CD14-positive monocyte (primary cell): ENCODE measurements at regions of chr1 and their contacts with region 1.

Region 1: GRCh38 chr1:182789138-182790076 is at the start of gene NPL:
- DNase-seq: peak; percentile 74 to 82 (median 76)
- H3K4me3 ChIP-seq: peak within 1 kb of the TSS; percentile 62 to 79 (median 74)
- H3K4me3 Mint-ChIP-seq: peak within 1 kb of the TSS; percentile 93 to 95
- H3K27ac ChIP-seq: peak within 1 kb of the TSS; percentile 46 to 88
- H3K27ac Mint-ChIP-seq: peak within 1 kb of the TSS; percentile 86 to 96 (median 89)
- H3K4me1 ChIP-seq: peaks cover 32 to 47% of the 10 kb centered on the region in 2 donors
- H3K4me1 Mint-ChIP-seq: peaks cover 58% of the 10 kb centered on the region
- H3K27me3 ChIP-seq: peaks cover 3 to 11% of the 10 kb centered on the region in 2 donors
- H3K27me3 Mint-ChIP-seq: peaks cover 16 to 24% (median 18%) of the 10 kb centered on the region in 3 donors
- CTCF ChIP-seq: no peak
- polyA plus RNA-seq, gene NPL: 56.6 to 127 (median 127) TPM

Region 2: GRCh38 chr1:182391362-182392044 is 397.9 kb before region 1 on chr1 and contains the start of gene GLUL:
- intact Hi-C with region 1: loop called in 1 of 2 experiments (anchors 10 kb)
- DNase-seq: peak; percentile 82 to 85 (median 83)
- H3K4me3 ChIP-seq: peak within 1 kb of the TSS; percentile 75 to 97 (median 96)
- H3K4me3 Mint-ChIP-seq: peak within 1 kb of the TSS; percentile 100
- H3K27ac ChIP-seq: peak within 1 kb of the TSS; percentile 77 to 79
- H3K27ac Mint-ChIP-seq: peak within 1 kb of the TSS; percentile 91 to 98 (median 95)
- H3K4me1 ChIP-seq: peaks cover 48 to 57% of the 10 kb centered on the region in 2 donors
- H3K4me1 Mint-ChIP-seq: peaks cover 70% of the 10 kb centered on the region
- H3K27me3 ChIP-seq: no peaks in the 10 kb centered on the region
- H3K27me3 Mint-ChIP-seq: peaks cover 0 to 3% (median 0%) of the 10 kb centered on the region in 3 donors
- CTCF ChIP-seq: no peak
- polyA plus RNA-seq, gene GLUL: 506 to 1,423 (median 523) TPM

Region 3: GRCh38 chr1:182446033-182446669 is 343.3 kb before region 1 on chr1:
- intact Hi-C with region 1: loop called (anchors 10 kb)
- DNase-seq: peak; percentile 34 to 52 (median 43)
- H3K4me3 ChIP-seq: no peak overlapping the region
- H3K4me3 Mint-ChIP-seq: no peak overlapping the region
- H3K27ac ChIP-seq: no peak overlapping the region
- H3K27ac Mint-ChIP-seq: no peak overlapping the region
- H3K4me1 ChIP-seq: no peaks in the 10 kb centered on the region
- H3K4me1 Mint-ChIP-seq: peaks cover 4% of the 10 kb centered on the region
- H3K27me3 ChIP-seq: no peaks in the 10 kb centered on the region
- H3K27me3 Mint-ChIP-seq: peaks cover 1 to 4% (median 2%) of the 10 kb centered on the region in 3 donors
- CTCF ChIP-seq: peak; percentile 79

Region 4: GRCh38 chr1:182604169-182605164 is 184.9 kb before region 1 on chr1 and contains the start of gene RGS16:
- intact Hi-C with region 1: loop called (anchors 5 kb)
- DNase-seq: peak; percentile 72 to 79 (median 77)
- H3K4me3 ChIP-seq: peak within 1 kb of the TSS in 2 of 3 experiments; percentile 5 to 68
- H3K4me3 Mint-ChIP-seq: peak within 1 kb of the TSS; percentile 9 to 77
- H3K27ac ChIP-seq: no peak within 1 kb of the TSS
- H3K27ac Mint-ChIP-seq: peak within 1 kb of the TSS in 3 of 7 donors; percentile 16 to 52 (median 33)
- H3K4me1 ChIP-seq: peaks cover 11 to 13% of the 10 kb centered on the region in 2 donors
- H3K4me1 Mint-ChIP-seq: peaks cover 20% of the 10 kb centered on the region
- H3K27me3 ChIP-seq: peaks cover 13 to 46% of the 10 kb centered on the region in 2 donors
- H3K27me3 Mint-ChIP-seq: peaks cover 9 to 23% (median 19%) of the 10 kb centered on the region in 3 donors
- CTCF ChIP-seq: no peak
- polyA plus RNA-seq, gene RGS16: 0.07 to 0.44 TPM in 2 of 3 donors, not detected in the other

Region 5: GRCh38 chr1:182725259-182726255 is 63.9 kb before region 1 on chr1:
- intact Hi-C with region 1: no loop called
- DNase-seq: no peak
- H3K4me3 ChIP-seq: no peak overlapping the region
- H3K4me3 Mint-ChIP-seq: no peak overlapping the region
- H3K27ac ChIP-seq: no peak overlapping the region
- H3K27ac Mint-ChIP-seq: no peak overlapping the region
- H3K4me1 ChIP-seq: no peaks in the 10 kb centered on the region
- H3K4me1 Mint-ChIP-seq: no peaks in the 10 kb centered on the region
- H3K27me3 ChIP-seq: peaks cover 0 to 2% of the 10 kb centered on the region in 2 donors
- H3K27me3 Mint-ChIP-seq: peaks cover 3 to 10% (median 4%) of the 10 kb centered on the region in 3 donors
- CTCF ChIP-seq: no peak

Region 6: DNA sequence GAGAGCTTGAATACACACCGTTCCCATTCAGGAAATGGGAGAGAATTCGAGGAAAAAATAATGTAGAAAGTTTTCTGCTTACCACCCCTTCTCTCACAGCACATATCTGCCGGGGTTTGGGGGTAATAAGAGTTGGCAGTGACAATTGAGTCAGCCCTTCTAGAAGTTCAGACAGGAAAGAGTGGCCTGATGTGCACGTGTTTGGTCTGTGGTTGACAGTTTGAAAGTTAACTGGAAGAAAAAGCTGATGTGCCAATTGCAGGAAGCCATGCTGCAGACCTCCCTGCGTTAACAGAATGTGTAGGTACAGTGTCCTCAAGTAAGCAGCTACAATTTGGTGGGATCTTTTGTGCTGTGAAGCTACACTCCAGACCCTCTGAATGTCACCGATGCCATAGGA is 100.6 kb after region 1 on chr1:
- intact Hi-C with region 1: no loop called
- DNase-seq: no peak
- H3K4me3 ChIP-seq: no peak overlapping the region
- H3K4me3 Mint-ChIP-seq: no peak overlapping the region
- H3K27ac ChIP-seq: peak overlapping the region in 1 of 2 donors; percentile 28
- H3K27ac Mint-ChIP-seq: peak overlapping the region in 6 of 7 donors; percentile 8 to 66 (median 42)
- H3K4me1 ChIP-seq: no peaks in the 10 kb centered on the region
- H3K4me1 Mint-ChIP-seq: peaks cover 7% of the 10 kb centered on the region
- H3K27me3 ChIP-seq: no peaks in the 10 kb centered on the region
- H3K27me3 Mint-ChIP-seq: peaks cover 0 to 3% (median 0%) of the 10 kb centered on the region in 3 donors
- CTCF ChIP-seq: no peak